PC-9 (cell line): ENCODE measurements at regions of chr4 and their contacts with region 1.

Region 1: DNA sequence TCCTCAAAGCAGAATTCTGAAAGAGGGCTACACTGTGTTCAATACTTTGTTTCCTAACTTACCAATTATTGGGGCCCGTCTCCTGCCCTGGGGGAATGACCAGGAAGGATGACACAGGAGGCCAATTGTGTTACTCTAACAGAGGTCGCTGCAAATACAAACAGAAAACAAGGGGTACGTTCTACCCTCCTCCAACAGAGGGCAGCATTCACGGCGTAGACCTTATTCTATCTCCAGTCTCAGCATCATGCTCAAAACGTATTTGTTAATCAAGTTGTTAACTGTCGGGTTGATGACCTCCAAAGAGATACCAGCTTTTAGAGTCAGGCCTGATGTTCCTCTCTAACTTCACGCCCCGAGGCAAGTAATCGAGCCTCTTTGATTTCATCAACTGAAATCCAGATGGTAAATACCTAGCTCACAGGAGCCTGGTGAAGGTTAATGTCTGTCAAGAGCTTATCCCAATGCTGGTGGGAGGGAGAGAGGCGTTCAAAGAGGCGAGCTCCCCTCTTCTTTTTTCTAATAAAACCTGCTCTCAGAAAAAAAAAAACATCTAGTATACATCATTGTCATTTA is 181.0 kb upstream of the KCNIP4 start:
- DNase-seq: peak in 1 of 2 experiments; percentile 15
- H3K4me3 ChIP-seq: no peak overlapping the region
- H3K27ac ChIP-seq: no peak overlapping the region
- H3K4me1 ChIP-seq: no peaks in the 10 kb centered on the region
- H3K27me3 ChIP-seq: no peaks in the 10 kb centered on the region
- CTCF ChIP-seq: peak; percentile 64

Region 2: DNA sequence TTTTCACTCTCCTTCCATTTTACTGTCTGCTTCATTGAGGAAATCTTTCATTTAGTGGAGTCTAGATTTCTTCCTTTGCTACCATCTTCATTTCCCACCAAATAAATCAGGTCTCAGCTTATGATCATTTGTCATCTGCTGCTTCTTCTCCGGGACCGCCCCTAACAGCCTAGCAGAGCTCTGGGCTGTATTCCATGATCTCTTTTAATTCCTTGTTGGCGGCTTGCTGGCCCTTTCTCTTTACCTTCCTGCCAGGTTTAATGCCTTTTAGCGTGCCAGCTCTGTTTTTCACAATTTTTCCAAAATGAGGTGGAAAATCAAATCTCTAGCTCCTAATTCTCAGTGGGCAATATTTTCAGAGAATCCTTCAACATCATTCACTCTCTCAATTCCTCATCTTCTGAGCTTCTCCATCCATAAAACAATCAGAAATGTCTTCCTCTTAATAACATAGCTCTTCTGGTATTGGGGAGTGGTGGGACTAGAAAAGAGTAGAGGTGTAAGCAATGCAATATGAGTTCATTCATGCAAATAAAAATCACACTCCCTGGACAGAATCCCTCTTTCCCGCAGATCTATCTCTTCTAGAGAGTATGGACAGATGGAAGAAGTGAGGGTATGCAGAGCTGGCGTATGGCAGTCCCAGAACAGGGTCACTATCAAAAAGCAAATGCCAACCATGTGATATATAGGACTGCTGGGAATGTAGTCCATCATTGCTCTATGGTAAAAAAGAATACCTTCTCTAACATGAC is 672.3 kb before region 1 on chr4:
- CTCF ChIA-PET with region 1: no interaction called
- POLR2A ChIA-PET with region 1: no interaction called
- intact Hi-C with region 1: no loop called
- DNase-seq: no peak
- H3K4me3 ChIP-seq: no peak overlapping the region
- H3K27ac ChIP-seq: no peak overlapping the region
- H3K4me1 ChIP-seq: no peaks in the 10 kb centered on the region
- H3K27me3 ChIP-seq: no peaks in the 10 kb centered on the region
- CTCF ChIP-seq: no peak

Region 3: GRCh38 chr4:21790438-21791029 is 339.0 kb before region 1 on chr4:
- CTCF ChIA-PET with region 1: no interaction called
- POLR2A ChIA-PET with region 1: no interaction called
- intact Hi-C with region 1: loop called (anchors 5 kb)
- DNase-seq: no peak
- H3K4me3 ChIP-seq: no peak overlapping the region
- H3K27ac ChIP-seq: no peak overlapping the region
- H3K4me1 ChIP-seq: no peaks in the 10 kb centered on the region
- H3K27me3 ChIP-seq: no peaks in the 10 kb centered on the region
- CTCF ChIP-seq: peak; percentile 68

Region 4: GRCh38 chr4:21948347-21949072 is 181.0 kb before region 1 on chr4 and contains the start of gene KCNIP4:
- CTCF ChIA-PET with region 1: no interaction called
- POLR2A ChIA-PET with region 1: no interaction called
- intact Hi-C with region 1: no loop called
- DNase-seq: no peak
- H3K4me3 ChIP-seq: no peak within 1 kb of the TSS
- H3K27ac ChIP-seq: no peak within 1 kb of the TSS
- H3K4me1 ChIP-seq: no peaks in the 10 kb centered on the region
- H3K27me3 ChIP-seq: no peaks in the 10 kb centered on the region
- CTCF ChIP-seq: no peak
- total RNA-seq, gene KCNIP4: not detected in 2 replicates

Region 5: DNA sequence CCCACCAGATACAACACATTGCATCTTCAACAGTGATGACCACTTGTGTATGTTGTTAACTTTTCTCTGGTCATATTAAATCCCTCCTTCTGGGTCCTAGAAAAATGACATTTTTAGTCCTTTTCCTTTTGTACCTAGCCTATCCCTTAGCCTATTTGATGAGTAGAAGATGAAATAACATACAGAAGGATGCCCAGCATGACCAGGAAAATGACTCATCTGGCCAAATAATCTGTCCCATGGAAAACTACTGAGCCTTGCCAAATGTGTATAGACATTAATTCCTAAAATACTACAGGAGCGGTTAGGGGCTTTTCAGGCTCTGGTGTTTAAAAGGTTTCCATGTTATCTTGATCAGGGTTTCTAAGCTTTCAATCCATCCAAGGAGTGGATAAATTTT is 52.0 kb before region 1 on chr4:
- CTCF ChIA-PET with region 1: no interaction called
- POLR2A ChIA-PET with region 1: no interaction called
- intact Hi-C with region 1: no loop called
- DNase-seq: no peak
- H3K4me3 ChIP-seq: no peak overlapping the region
- H3K27ac ChIP-seq: no peak overlapping the region
- H3K4me1 ChIP-seq: no peaks in the 10 kb centered on the region
- H3K27me3 ChIP-seq: no peaks in the 10 kb centered on the region
- CTCF ChIP-seq: no peak

Region 6: GRCh38 chr4:22235698-22236097 is 106.2 kb after region 1 on chr4:
- CTCF ChIA-PET with region 1: no interaction called
- POLR2A ChIA-PET with region 1: no interaction called
- intact Hi-C with region 1: no loop called
- DNase-seq: no peak
- H3K4me3 ChIP-seq: no peak overlapping the region
- H3K27ac ChIP-seq: no peak overlapping the region
- H3K4me1 ChIP-seq: no peaks in the 10 kb centered on the region
- H3K27me3 ChIP-seq: peaks cover 23% of the 10 kb centered on the region; the same call in 1 of the 2 replicates
- CTCF ChIP-seq: no peak

Region 7: GRCh38 chr4:22356987-22357596 is 227.6 kb after region 1 on chr4:
- CTCF ChIA-PET with region 1: no interaction called
- POLR2A ChIA-PET with region 1: no interaction called
- intact Hi-C with region 1: loop called (anchors 10 kb)
- DNase-seq: no peak
- H3K4me3 ChIP-seq: no peak overlapping the region
- H3K27ac ChIP-seq: no peak overlapping the region
- H3K4me1 ChIP-seq: no peaks in the 10 kb centered on the region
- H3K27me3 ChIP-seq: no peaks in the 10 kb centered on the region
- CTCF ChIP-seq: no peak